ENCODE measurements at regions of chr7 and their contacts with region 1.

Region 1: DNA sequence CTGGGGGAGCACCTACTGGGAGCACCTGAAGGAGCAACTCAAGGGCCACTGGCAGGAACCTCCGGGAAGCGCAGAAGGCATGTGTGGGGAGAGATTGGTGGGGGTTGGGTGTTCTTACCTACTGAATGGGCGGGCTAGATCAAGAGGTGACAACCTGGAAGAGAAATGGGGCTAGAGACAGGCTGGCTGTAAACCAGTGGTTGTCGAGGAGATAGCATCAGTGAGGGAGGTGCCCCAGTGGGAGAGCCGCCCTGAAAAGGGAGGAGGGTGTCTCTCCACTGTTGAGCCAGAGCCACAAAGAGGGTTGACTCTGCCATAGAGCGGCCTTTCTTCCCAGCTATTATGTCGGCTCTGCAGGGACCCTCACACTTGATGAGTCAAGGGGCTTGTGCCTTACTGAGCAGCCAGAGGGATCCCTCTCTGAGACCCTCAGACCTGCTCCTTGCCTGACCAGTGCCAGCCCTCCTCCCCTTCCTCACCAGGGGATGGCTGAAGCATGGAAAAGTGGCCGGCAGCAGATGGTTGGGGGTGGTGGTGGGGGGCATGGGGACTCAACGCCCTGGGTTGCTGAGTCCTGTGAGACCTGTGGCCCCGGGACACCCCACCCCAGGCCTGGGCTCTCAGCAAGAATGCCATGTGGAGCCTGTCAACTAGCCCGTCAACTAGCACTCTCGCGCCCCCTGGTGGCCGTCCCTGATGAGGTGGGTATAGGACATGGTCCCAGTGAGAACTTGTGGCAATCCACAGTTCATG is 36.5 kb upstream of the PURB start:
- DNase-seq: peak; percentile 96
- ATAC-seq: peak; percentile 99
- H3K4me3 Mint-ChIP-seq: no peak overlapping the region
- H3K27ac Mint-ChIP-seq: peak overlapping the region; percentile 46
- H3K4me1 Mint-ChIP-seq: peaks cover 14% of the 10 kb centered on the region
- H3K27me3 Mint-ChIP-seq: peaks cover 5% of the 10 kb centered on the region

Region 2: GRCh38 chr7:44678471-44679179 is 243.2 kb before region 1 on chr7:
- CTCF ChIA-PET with region 1: no interaction called
- DNase-seq: peak; percentile 36
- ATAC-seq: no peak
- H3K4me3 Mint-ChIP-seq: no peak overlapping the region
- H3K27ac Mint-ChIP-seq: peak overlapping the region; percentile 12
- H3K4me1 Mint-ChIP-seq: no peaks in the 10 kb centered on the region
- H3K27me3 Mint-ChIP-seq: no peaks in the 10 kb centered on the region

Region 3: GRCh38 chr7:44885394-44886317 is 36.1 kb before region 1 on chr7 and contains the start of gene PURB:
- CTCF ChIA-PET with region 1: interaction called, 19 read pairs
- DNase-seq: peak; percentile 98
- ATAC-seq: peak; percentile 89
- H3K4me3 Mint-ChIP-seq: peak within 1 kb of the TSS; percentile 93
- H3K27ac Mint-ChIP-seq: peak within 1 kb of the TSS; percentile 100
- H3K4me1 Mint-ChIP-seq: peaks cover 56% of the 10 kb centered on the region
- H3K27me3 Mint-ChIP-seq: no peaks in the 10 kb centered on the region
- total RNA-seq, gene PURB: 33.4 to 35.4 TPM